GM12878 (cell line): ENCODE measurements at regions of chr6 and their contacts with region 1.

Region 1: DNA sequence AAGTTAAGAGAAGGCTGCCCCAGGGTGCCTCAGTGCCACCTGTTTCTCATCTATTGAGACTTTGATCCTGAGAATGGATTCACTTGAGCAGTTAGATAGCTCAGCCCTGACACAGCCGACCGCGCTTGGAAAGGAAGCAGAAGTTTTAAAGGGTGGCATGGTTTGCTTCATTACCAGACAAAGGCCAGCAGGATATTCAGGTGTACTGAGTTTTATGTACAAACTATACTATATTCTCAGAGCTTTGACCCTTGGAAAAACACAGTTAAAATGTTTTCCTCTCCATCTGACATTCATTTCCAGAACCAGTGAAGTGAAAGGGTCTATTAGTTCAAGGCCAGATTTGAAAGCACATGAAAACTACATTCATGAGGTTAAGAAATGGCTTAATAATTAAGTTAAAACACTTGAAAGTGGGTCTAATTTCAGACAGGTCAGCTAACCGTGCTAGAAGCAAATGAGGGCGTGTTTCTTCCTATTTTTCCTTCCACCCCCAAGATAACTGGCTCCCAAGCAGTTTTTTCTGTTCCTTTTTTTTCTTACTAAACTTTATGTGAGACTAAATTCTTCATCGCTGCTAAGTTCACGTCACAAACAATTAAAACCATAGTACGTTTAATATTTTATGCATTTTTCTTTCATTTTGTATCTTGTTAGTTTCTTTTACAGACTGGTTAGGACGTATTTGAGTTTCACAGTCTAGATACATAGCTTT is 385.3 kb upstream of the SOX4 start:
- DNase-seq: no peak
- ATAC-seq: peak; percentile 54
- H3K4me3 ChIP-seq: no peak overlapping the region
- H3K27ac ChIP-seq: peak overlapping the region; percentile 50
- H3K4me1 ChIP-seq: peaks cover 39% of the 10 kb centered on the region
- H3K27me3 ChIP-seq: no peaks in the 10 kb centered on the region
- CTCF ChIP-seq: no peak
- EP300 ChIP-seq: no peak; a peak in 1 of 4 replicates
- POLR2A ChIP-seq: no peak
- RAD21 ChIP-seq: no peak

Region 2: GRCh38 chr6:20640181-20640580 is 568.1 kb before region 1 on chr6:
- CTCF ChIA-PET with region 1: no interaction called
- POLR2A ChIA-PET with region 1: no interaction called
- RAD21 ChIA-PET with region 1: no interaction called
- SMC1A ChIA-PET with region 1: no interaction called
- in situ Hi-C with region 1: no loop called
- intact Hi-C with region 1: no loop called
- DNase-seq: no peak
- ATAC-seq: no peak
- H3K4me3 ChIP-seq: no peak overlapping the region
- H3K27ac ChIP-seq: no peak overlapping the region
- H3K4me1 ChIP-seq: no peaks in the 10 kb centered on the region
- H3K27me3 ChIP-seq: no peaks in the 10 kb centered on the region
- CTCF ChIP-seq: no peak
- EP300 ChIP-seq: no peak
- POLR2A ChIP-seq: no peak
- RAD21 ChIP-seq: no peak

Region 3: GRCh38 chr6:21188505-21189223 is 19.6 kb before region 1 on chr6:
- CTCF ChIA-PET with region 1: interaction called, 8 read pairs
- POLR2A ChIA-PET with region 1: interaction called, 6 read pairs
- RAD21 ChIA-PET with region 1: interaction called, 7 read pairs
- SMC1A ChIA-PET with region 1: interaction called, 10 read pairs
- in situ Hi-C with region 1: no loop called
- intact Hi-C with region 1: no loop called
- DNase-seq: peak; percentile 82
- ATAC-seq: peak; percentile 77
- H3K4me3 ChIP-seq: no peak overlapping the region
- H3K27ac ChIP-seq: peak overlapping the region; percentile 77
- H3K4me1 ChIP-seq: peaks cover 19% of the 10 kb centered on the region
- H3K27me3 ChIP-seq: no peaks in the 10 kb centered on the region
- CTCF ChIP-seq: no peak
- EP300 ChIP-seq: no peak
- POLR2A ChIP-seq: no peak
- RAD21 ChIP-seq: no peak